ENCODE measurements at regions of chr1 and their contacts with region 1.

Region 1: GRCh38 chr1:181189691-181190363 is 101.3 kb downstream of the IER5 start:
- DNase-seq: peak; percentile 81
- H3K4me3 Mint-ChIP-seq: no peak overlapping the region
- H3K27ac Mint-ChIP-seq: no peak overlapping the region
- H3K4me1 Mint-ChIP-seq: peaks cover 2% of the 10 kb centered on the region
- H3K27me3 Mint-ChIP-seq: no peaks in the 10 kb centered on the region

Region 2: DNA sequence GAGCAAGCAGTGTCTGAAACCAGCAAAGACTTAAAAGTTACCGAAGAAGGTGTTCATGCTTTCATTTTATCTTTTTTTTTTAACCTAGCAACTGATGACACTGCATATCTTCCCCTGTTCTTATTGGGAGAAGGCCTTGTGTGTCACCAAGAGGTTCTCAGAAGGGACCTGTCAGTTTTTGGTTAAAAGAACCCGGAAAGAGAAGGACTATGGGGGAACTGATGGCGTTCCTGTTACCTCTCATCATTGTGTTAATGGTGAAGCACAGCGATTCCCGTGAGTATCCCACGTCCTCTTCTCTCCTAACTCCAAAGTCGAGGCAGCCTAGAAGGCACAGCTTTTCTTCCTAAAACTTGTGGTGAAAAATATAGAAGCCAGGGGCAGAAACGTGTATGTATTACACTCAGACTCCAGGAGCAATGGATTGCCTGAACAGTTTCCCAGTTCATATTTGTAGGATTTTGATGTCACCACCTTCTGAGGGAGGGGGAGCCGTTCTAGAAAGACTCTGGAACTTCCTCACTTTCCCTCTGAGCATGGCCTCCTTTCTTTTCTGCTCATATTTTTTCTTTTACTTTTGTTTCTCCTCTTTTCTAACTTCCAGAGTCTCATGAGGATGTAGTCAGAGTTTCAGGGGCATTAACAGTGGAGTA is 155.9 kb before region 1 on chr1 and contains the start of gene MR1:
- CTCF ChIA-PET with region 1: no interaction called
- POLR2A ChIA-PET with region 1: no interaction called
- intact Hi-C with region 1: no loop called
- DNase-seq: peak; percentile 37
- H3K4me3 Mint-ChIP-seq: peak within 1 kb of the TSS; percentile 93
- H3K27ac Mint-ChIP-seq: peak within 1 kb of the TSS; percentile 97
- H3K4me1 Mint-ChIP-seq: peaks cover 52% of the 10 kb centered on the region
- H3K27me3 Mint-ChIP-seq: no peaks in the 10 kb centered on the region
- total RNA-seq, gene MR1: 19.5 to 21.2 TPM

Region 3: GRCh38 chr1:181202986-181203555 is 13.2 kb after region 1 on chr1:
- CTCF ChIA-PET with region 1: interaction called, 10 read pairs
- POLR2A ChIA-PET with region 1: no interaction called
- intact Hi-C with region 1: no loop called
- DNase-seq: no peak
- H3K4me3 Mint-ChIP-seq: no peak overlapping the region
- H3K27ac Mint-ChIP-seq: no peak overlapping the region
- H3K4me1 Mint-ChIP-seq: no peaks in the 10 kb centered on the region
- H3K27me3 Mint-ChIP-seq: no peaks in the 10 kb centered on the region

Region 4: GRCh38 chr1:181255270-181255929 is 65.6 kb after region 1 on chr1:
- CTCF ChIA-PET with region 1: no interaction called
- POLR2A ChIA-PET with region 1: no interaction called
- intact Hi-C with region 1: no loop called
- DNase-seq: no peak
- H3K4me3 Mint-ChIP-seq: no peak overlapping the region
- H3K27ac Mint-ChIP-seq: no peak overlapping the region
- H3K4me1 Mint-ChIP-seq: no peaks in the 10 kb centered on the region
- H3K27me3 Mint-ChIP-seq: peaks cover 2% of the 10 kb centered on the region

Region 5: GRCh38 chr1:181318022-181318857 is 128.4 kb after region 1 on chr1:
- CTCF ChIA-PET with region 1: no interaction called
- POLR2A ChIA-PET with region 1: no interaction called
- intact Hi-C with region 1: loop called (anchors 5 kb)
- DNase-seq: no peak
- H3K4me3 Mint-ChIP-seq: peak overlapping the region; percentile 64
- H3K27ac Mint-ChIP-seq: no peak overlapping the region
- H3K4me1 Mint-ChIP-seq: peaks cover 22% of the 10 kb centered on the region
- H3K27me3 Mint-ChIP-seq: peaks cover 57% of the 10 kb centered on the region

Region 6: DNA sequence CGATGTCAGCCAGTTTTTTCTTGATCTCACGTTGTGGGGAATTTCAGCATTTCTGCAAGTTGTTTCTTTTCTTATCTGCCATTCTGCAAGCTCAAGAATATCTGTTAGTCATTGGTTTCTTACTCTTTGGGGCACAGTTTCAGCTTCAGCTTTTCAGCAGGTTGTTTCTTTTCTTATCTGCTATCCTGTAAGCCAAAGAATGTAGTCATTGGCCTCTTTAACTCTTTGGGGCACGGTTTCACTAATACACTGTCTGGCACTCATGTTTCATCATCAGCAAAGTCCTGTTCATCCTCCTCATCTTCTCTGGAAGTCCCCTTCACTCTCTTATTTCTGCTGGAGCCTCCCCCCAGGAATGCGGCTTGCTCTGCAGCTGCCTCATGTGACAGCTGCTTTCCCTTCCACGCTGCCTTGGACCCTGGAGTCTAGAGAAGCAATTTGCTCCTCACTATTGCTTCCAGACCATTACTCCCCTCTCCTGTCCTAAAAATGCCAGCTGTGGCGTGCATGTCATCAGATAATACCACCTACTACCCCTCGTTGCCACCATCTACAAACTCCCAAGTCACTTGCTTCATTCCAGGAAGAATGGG is 226.5 kb after region 1 on chr1:
- CTCF ChIA-PET with region 1: interaction called, 31 read pairs
- POLR2A ChIA-PET with region 1: no interaction called
- intact Hi-C with region 1: no loop called
- DNase-seq: no peak
- H3K4me3 Mint-ChIP-seq: no peak overlapping the region
- H3K27ac Mint-ChIP-seq: no peak overlapping the region
- H3K4me1 Mint-ChIP-seq: no peaks in the 10 kb centered on the region
- H3K27me3 Mint-ChIP-seq: no peaks in the 10 kb centered on the region

Region 7: GRCh38 chr1:181424786-181425403 is 235.1 kb after region 1 on chr1:
- CTCF ChIA-PET with region 1: interaction called, 103 read pairs
- POLR2A ChIA-PET with region 1: no interaction called
- intact Hi-C with region 1: loop called (anchors 1 kb)
- DNase-seq: peak; percentile 84
- H3K4me3 Mint-ChIP-seq: peak overlapping the region; percentile 41
- H3K27ac Mint-ChIP-seq: no peak overlapping the region
- H3K4me1 Mint-ChIP-seq: peaks cover 12% of the 10 kb centered on the region
- H3K27me3 Mint-ChIP-seq: peaks cover 8% of the 10 kb centered on the region

Region 8: DNA sequence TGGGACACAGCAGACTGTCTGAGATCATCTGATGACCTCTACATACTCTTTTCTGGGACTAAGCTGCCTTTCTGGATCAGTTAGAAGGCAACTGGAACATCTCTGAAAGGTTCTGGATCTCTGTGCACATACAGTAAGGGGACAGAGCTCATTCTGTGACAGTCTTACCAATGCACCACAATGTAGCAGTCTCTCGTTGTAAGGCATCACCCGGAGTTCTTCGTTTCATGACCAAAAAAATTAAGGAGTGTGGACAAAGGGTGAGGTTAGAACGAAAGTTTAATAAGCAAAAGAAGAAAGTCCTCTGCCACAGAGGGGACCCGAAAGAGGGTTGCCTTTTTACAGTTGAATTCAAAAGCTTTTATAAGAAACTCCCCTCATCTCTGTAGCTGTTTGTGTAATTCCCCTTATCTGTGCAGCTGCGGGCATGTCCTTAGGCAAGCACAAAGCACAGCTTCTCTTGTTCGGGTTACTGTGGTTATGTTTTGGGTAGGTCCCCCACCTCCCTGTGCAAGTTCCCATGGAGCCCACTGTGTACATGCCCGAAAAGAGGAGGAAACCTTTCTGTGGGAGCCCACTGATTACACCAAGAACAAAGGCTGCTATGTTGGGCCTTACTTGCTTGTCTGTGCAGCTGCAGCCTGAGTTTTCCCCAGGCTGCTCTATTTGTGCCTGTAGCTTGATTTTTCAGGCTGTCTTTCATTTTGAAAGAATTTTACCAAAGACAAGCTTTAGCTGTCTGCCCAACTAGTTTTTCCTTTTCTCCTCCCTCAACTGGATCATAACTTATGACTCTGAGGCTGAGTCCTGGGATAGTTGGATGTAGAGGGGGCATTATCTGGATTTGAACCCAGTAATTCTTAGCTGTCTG is 240.4 kb after region 1 on chr1:
- CTCF ChIA-PET with region 1: interaction called, 103 read pairs
- POLR2A ChIA-PET with region 1: no interaction called
- intact Hi-C with region 1: loop called (anchors 1 kb)
- DNase-seq: no peak
- H3K4me3 Mint-ChIP-seq: no peak overlapping the region
- H3K27ac Mint-ChIP-seq: no peak overlapping the region
- H3K4me1 Mint-ChIP-seq: no peaks in the 10 kb centered on the region
- H3K27me3 Mint-ChIP-seq: peaks cover 14% of the 10 kb centered on the region

Region 9: DNA sequence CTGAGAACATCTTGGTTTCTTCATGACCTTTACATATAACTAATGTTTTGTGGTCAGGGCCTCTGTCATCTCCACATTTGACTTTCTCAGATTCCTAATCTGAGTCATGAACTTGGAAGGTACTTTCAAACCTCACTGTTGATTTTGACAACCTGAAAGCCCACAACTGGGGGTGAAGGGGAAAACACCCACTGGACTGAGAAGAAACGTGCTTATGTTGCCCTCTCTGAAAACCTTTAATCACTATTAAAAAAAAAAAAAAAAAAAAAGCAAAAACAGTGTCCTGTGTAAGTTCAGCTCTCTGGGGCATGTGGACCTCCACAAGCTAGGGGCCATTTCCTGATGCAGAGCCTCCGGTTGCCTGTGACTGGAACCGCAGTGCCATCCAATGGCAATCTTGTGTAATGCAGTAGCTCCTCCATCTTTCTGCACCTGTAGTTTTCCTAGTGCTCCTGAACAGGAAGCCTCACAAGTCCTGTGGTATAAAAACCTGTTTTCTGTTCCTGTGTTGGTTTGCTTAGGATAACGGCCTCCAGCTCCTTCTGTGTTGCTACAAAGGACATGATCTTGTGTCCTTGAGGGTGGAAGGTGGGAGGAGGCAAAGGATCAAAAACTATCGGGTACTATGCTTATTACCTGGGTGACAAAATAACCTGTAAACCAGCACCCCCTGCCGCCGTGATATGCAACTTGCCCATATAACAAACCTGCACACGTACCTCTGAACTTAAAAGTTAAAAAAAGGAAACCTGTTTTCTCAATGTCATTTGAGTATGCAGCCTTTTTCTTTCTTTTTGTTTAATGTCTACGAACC is 747.1 kb after region 1 on chr1:
- CTCF ChIA-PET with region 1: interaction called, 4 read pairs
- POLR2A ChIA-PET with region 1: no interaction called
- intact Hi-C with region 1: loop called (anchors 10 kb)
- DNase-seq: peak; percentile 68
- H3K4me3 Mint-ChIP-seq: no peak overlapping the region
- H3K27ac Mint-ChIP-seq: no peak overlapping the region
- H3K4me1 Mint-ChIP-seq: peaks cover 4% of the 10 kb centered on the region
- H3K27me3 Mint-ChIP-seq: no peaks in the 10 kb centered on the region